ENCODE measurements at regions of chr12 and their contacts with region 1.

Region 1: DNA sequence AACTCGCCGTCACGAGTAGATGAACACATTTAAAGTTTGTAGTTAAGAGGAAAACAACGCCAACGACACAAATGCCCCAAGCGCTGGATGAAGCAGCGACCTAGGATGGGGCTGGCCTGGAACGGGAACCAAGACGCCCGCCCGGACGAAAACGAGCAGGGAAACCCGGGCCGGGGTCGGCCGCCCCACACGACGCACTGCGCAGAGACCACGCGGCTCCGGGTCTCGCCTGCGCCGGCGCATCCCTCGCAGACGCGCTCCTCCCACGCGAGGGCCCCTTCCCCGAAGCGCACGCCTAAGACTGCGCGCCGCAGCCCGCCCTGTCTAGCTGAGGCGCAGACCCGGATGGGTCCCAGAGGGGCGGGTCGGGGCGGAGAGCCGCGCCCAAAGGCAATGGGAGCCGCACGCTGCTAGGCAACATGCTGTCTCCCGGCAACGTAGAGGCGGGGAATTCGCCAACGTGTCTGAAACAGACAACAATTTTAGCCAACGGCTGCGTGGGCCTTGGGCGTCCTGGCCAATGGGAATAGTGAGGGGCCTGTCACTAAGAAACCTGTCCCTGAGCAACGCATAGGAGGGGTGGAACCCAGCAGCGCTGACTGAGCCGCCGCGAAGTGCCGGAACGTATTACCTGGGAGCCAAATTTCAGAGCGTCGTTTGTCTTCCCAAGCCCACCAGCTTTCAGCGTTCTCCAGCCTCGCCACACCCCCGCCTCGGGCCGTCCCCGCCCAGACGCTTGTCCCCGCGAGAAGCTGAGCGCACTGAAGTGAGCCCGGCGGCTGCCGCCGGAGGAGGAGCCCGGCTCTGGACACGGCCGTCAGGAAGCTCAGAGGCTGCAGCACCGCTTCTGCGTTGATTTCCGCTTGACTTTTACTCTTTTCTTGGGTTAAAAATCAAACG is 21.0 kb upstream of the CHFR start:
- DNase-seq: peak; percentile 98

Region 2: DNA sequence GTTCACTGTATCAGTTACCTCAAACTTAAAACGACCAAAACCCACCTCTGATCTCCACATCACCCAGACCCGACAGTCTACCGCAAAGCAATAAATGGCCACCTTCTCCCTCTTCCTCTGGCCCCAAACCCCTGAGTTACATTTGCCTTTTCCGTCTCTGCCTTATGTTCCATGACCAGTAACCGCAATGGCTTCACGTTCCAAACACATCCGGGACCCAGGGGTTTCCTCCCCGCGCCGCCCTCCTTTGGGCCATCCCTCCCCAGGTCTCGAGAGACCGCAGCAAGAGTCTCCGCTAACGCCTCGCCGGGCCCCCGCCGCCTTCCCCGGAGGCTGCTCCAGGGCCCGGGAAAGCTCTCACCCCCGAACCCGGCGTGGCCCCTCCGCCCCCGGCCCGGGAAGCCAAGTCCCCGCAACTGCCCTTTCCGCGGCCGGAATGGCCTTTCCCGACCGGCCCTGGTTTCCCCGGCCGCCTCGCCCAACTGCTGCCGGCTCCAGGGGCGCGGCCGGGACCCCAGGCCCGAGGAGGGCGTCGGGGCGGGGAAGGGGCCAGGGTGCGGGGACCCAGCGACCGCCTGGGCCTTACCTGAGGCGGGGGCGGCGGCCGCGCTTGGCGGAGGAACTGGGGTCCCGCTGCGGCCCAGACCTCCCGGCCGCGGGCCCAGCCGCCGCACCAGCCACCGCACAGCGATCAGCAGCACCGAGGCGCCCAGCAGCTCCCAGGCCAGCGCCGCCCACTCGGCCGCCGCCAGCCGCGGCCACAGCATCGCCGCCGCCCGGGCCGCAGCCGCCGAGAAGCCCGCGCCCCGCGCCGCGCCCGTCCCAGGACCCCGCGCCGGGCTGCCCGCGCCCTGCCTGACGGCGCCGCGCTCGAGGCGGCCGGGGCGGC is 147.1 kb before region 1 on chr12 and contains the start of gene ANKLE2:
- intact Hi-C with region 1: no loop called
- DNase-seq: peak; percentile 91
- total RNA-seq, gene ANKLE2: 36.6 to 43.5 TPM

Region 3: DNA sequence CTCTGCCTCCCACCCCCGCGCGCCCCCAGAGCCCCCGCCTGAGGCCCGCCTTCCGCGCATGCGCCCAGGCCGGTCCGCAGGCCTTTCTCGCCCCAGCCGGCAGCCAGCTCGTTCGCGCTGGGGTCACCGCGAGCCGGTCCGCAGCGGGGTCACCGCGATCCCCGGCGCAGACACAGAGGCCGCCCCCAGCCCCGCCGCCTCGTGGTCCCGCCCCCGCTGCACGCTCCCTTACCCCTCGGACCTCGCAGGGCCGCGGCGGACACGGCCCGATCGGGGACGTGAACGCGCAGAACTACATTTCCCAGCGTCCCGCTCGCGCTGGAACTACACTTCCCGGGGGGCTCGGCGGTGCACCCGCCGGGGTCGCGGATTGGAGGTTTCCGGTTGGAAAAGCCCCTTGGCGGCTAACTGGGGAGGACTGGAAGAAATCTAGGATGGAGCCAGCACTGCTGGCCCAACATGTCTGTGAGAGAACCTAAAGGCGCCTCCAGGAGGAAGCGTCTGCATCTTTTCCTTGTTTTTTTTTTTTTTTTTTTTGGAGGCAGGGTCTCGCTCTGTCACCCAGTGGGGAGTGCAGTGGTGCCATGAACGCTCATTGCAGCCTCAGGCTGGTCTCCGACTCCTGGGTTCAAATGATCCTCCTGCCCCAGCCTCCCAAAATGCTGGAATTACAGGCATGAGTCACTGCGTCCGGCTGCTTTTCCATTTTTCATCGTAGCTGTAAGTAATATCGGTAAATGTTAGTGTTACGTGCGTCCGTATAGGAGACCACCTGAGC is 47.8 kb after region 1 on chr12 and contains the start of gene ZNF605:
- intact Hi-C with region 1: loop called in 1 of 2 experiments (anchors 2 kb)
- DNase-seq: peak; percentile 97
- total RNA-seq, gene ZNF605: 10.2 to 12.2 TPM